ENCODE measurements at regions of chr1 and their contacts with region 1.

Region 1: DNA sequence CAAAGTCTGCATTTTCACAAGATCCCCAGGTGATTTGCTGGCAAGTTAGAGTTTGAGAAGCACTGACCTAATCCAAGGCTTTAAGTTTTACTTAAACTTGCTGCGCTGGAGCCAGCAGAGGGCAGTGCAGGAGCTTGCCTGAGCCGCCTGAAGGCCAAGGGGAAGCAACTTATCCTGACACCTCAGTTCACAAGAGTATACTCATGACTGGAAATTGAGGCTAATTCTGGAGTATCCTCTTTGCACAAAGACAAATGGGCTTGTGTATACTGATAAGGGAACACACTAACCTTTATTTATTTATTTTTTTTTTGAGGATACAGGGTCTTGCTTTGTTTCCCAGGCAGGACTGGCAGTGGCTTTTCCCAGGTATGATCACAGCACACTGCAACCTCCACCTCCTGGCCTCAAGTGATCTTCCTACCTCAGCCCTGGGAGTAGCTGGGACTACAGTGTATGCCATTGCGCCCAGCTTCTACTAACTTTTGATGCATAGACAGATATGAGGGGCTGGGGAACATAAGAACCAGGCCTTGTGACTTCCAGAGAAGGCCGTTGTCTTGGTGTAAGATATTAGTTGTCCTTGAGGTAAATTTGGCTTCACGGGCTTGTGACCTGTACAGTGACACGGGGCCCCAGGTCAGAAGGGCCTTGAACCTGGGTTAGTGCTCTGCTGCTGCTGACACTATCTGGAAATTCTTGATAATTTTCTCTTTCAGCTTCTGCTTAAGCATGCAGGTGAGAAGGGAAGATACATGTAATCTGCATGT is 29.0 kb upstream of the SLAMF1 start:
- DNase-seq: peak; percentile 50 to 84 (median 66)
- ATAC-seq: peak; percentile 79 to 82
- H3K4me3 Mint-ChIP-seq: peak overlapping the region in 5 of 10 donors; percentile 6 to 43 (median 27)
- H3K27ac Mint-ChIP-seq: peak overlapping the region in 7 of 10 donors; percentile 29 to 95 (median 87)
- H3K4me1 Mint-ChIP-seq: peaks cover 9 to 16% (median 11%) of the 10 kb centered on the region in 4 donors
- H3K27me3 Mint-ChIP-seq: no peaks in the 10 kb centered on the region

Region 2: DNA sequence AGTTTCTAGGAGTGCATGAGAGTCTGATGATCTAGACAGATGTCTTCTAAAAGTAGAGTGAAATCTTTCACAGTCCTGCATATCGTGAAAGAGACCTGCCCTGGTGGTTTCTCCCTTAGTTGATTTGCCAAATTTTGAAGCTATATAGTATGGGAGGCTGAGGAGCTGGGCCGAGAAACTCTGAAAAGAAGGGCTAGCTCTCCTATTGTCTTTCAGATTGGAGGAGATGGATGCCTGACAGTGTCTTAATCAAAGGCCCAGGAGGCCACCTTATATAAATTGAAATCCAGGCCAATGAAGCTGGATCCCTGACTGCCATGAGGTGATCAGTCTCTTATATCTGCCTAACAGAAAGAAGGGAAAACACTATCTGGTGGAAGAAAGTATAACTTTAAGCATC is 78.1 kb before region 1 on chr1:
- POLR2A ChIA-PET with region 1: no interaction called
- DNase-seq: no peak
- ATAC-seq: no peak
- H3K4me3 Mint-ChIP-seq: no peak overlapping the region
- H3K27ac Mint-ChIP-seq: peak overlapping the region in 3 of 10 donors; percentile 29 to 43 (median 34)
- H3K4me1 Mint-ChIP-seq: peaks cover 0 to 4% (median 0%) of the 10 kb centered on the region in 4 donors
- H3K27me3 Mint-ChIP-seq: no peaks in the 10 kb centered on the region

Region 3: GRCh38 chr1:160618763-160619274 is 57.0 kb before region 1 on chr1:
- POLR2A ChIA-PET with region 1: interaction called, 11 read pairs
- DNase-seq: peak in 7 of 10 donors; percentile 25 to 65 (median 39)
- ATAC-seq: peak; percentile 58 to 63
- H3K4me3 Mint-ChIP-seq: no peak overlapping the region
- H3K27ac Mint-ChIP-seq: peak overlapping the region in 8 of 10 donors; percentile 17 to 68 (median 43)
- H3K4me1 Mint-ChIP-seq: peaks cover 27 to 67% (median 45%) of the 10 kb centered on the region in 4 donors
- H3K27me3 Mint-ChIP-seq: no peaks in the 10 kb centered on the region

Region 4: DNA sequence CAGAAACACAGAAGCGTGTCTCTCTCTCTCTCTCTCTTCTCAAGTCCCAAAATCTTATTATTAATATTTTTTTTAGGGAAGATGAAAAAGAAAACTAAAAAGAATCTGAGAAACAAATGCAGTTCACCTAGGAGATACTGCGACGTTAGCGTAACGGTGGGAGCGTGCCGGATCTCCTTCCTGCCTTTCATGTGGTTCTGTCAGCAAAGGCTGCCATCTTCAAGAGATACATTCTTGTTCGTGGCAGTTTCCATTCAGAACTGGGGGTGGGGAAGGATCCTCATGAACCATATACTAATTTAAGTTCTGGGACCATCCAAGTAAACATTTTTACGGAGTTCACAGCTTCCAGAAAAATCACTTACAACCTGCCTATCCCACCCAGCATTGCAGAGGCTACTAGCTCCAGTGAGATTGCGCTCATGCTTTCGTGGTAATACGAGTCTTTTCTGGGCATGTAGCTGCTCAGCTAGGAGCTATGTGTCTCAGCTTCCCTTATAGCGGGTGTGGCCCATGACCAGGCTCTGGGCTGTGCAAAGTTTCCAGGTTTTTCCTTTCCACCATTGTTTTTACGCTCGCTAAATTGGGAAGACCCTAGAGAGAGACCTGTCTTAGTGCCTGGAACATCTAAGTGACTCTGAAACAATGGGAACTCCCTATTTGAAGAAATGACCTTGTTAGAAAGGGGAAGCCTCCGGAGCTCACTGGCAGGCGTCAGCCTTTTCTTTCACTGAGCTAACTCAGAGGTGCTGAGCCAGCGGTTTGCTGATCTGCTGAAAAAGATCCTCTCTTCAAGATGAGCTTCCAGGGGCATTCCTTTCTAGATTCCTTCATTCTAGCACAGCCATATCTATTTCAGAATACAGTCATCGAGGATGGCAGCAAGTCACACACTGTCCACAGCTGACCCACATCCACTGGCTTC is 46.3 kb before region 1 on chr1:
- POLR2A ChIA-PET with region 1: interaction called, 13 read pairs
- DNase-seq: peak; percentile 53 to 92 (median 84)
- ATAC-seq: peak; percentile 80 to 90
- H3K4me3 Mint-ChIP-seq: peak overlapping the region; percentile 72 to 90 (median 84)
- H3K27ac Mint-ChIP-seq: peak overlapping the region; percentile 94 to 100 (median 99)
- H3K4me1 Mint-ChIP-seq: peaks cover 57 to 100% (median 96%) of the 10 kb centered on the region in 4 donors
- H3K27me3 Mint-ChIP-seq: no peaks in the 10 kb centered on the region

Region 5: GRCh38 chr1:161082991-161083742 is 407.3 kb after region 1 on chr1:
- POLR2A ChIA-PET with region 1: no interaction called
- DNase-seq: no peak
- ATAC-seq: no peak
- H3K4me3 Mint-ChIP-seq: no peak overlapping the region
- H3K27ac Mint-ChIP-seq: no peak overlapping the region
- H3K4me1 Mint-ChIP-seq: peaks cover 0 to 6% (median 0%) of the 10 kb centered on the region in 4 donors
- H3K27me3 Mint-ChIP-seq: peaks cover 0 to 2% (median 0%) of the 10 kb centered on the region in 5 donors

Measured in naive thymus-derived CD8-positive, alpha-beta T cell (primary cell).